ENCODE measurements at regions of chr21 and their contacts with region 1.

Region 1: GRCh38 chr21:33324291-33325221 is at the start of gene IFNAR1:
- DNase-seq: peak; percentile 97
- ATAC-seq: peak; percentile 80
- H3K4me3 Mint-ChIP-seq: no peak within 1 kb of the TSS
- H3K27ac Mint-ChIP-seq: no peak within 1 kb of the TSS
- H3K4me1 Mint-ChIP-seq: peaks cover 32% of the 10 kb centered on the region
- H3K27me3 Mint-ChIP-seq: no peaks in the 10 kb centered on the region
- CTCF ChIP-seq: no peak
- total RNA-seq, gene IFNAR1: 33.9 and 34.5 TPM in 2 replicates

Region 2: GRCh38 chr21:33218421-33218820 is 106.1 kb before region 1 on chr21:
- CTCF ChIA-PET with region 1: no interaction called
- POLR2A ChIA-PET with region 1: interaction called, 17 read pairs
- intact Hi-C with region 1: no loop called
- DNase-seq: no peak
- ATAC-seq: no peak
- H3K4me3 Mint-ChIP-seq: no peak overlapping the region
- H3K27ac Mint-ChIP-seq: peak overlapping the region; percentile 47
- H3K4me1 Mint-ChIP-seq: peaks cover 52% of the 10 kb centered on the region
- H3K27me3 Mint-ChIP-seq: no peaks in the 10 kb centered on the region
- CTCF ChIP-seq: no peak

Region 3: DNA sequence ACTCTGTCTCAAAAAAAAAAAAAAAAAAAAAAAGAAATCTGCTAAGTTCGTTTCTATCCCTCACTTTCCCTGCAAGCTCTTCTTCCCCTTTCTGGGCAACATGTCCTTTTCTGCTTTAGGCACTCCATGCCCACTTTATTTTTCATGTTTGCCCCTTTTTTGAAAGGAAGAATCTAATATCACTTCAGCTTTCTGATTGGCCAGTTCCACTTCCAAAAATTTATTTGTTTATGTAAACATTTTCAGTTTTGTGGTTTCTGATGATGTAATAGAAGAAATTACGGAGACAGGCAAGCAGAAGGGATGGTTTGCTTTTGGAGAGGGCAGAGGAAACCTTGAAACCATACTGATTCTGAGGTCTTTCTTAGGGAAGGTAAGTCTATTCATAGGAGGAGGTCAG is 15.4 kb after region 1 on chr21:
- CTCF ChIA-PET with region 1: no interaction called
- POLR2A ChIA-PET with region 1: interaction called, 33 read pairs
- intact Hi-C with region 1: loop called (anchors 2 kb)
- DNase-seq: no peak
- ATAC-seq: no peak
- H3K4me3 Mint-ChIP-seq: peak overlapping the region; percentile 46
- H3K27ac Mint-ChIP-seq: peak overlapping the region; percentile 83
- H3K4me1 Mint-ChIP-seq: peaks cover 43% of the 10 kb centered on the region
- H3K27me3 Mint-ChIP-seq: no peaks in the 10 kb centered on the region
- CTCF ChIP-seq: no peak

Region 4: GRCh38 chr21:33403779-33404585 is 79.4 kb after region 1 on chr21:
- CTCF ChIA-PET with region 1: no interaction called
- POLR2A ChIA-PET with region 1: interaction called, 11 read pairs
- intact Hi-C with region 1: loop called (anchors 2 kb)
- DNase-seq: peak; percentile 39
- ATAC-seq: peak; percentile 43
- H3K4me3 Mint-ChIP-seq: peak overlapping the region; percentile 95
- H3K27ac Mint-ChIP-seq: peak overlapping the region; percentile 94
- H3K4me1 Mint-ChIP-seq: peaks cover 80% of the 10 kb centered on the region
- H3K27me3 Mint-ChIP-seq: no peaks in the 10 kb centered on the region
- CTCF ChIP-seq: no peak

Region 5: DNA sequence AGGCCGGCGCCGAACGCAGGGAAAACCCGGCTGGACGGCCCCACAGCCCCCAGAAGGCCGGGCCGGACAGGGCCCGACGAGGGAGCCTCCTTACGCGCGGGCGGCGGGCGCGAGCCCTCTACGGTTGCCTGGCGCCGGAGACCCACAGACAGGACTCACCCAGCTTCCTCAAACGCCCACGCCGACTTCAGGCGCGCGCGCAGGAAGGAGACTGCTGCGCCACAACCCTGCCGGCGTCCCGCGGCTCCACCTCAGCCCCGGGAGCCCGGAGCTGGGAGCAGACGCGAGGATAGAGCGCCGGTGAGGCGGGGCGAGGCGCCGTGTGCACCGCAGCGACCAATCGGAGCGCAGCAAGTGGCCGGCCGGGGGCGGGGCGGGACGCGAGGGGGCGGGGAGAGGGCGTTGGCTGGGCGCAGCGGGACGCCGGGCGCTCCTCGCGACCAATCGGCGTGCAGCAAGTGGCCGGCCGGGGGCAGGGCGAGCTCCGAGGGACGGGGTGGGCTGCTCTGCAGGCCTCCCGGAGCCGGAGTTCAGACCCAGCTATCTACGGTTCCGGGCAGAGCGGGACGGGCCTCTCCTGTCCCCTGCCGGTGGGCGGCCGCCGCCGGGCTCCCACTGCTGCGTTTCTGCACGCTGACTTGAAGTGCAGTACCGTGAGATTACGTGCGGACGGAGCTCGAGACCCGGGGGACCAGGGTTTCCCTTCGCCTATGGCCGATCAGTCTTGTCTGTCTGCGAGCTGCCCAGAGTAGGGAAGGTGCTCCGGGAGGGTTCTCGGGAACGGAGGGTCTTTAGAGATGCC is 155.3 kb after region 1 on chr21 and contains the start of gene TMEM50B:
- CTCF ChIA-PET with region 1: no interaction called
- POLR2A ChIA-PET with region 1: interaction called, 23 read pairs
- intact Hi-C with region 1: loop called (anchors 1 kb)
- DNase-seq: peak; percentile 88
- ATAC-seq: peak; percentile 88
- H3K4me3 Mint-ChIP-seq: peak within 1 kb of the TSS; percentile 92
- H3K27ac Mint-ChIP-seq: peak within 1 kb of the TSS; percentile 90
- H3K4me1 Mint-ChIP-seq: peaks cover 20% of the 10 kb centered on the region
- H3K27me3 Mint-ChIP-seq: no peaks in the 10 kb centered on the region
- CTCF ChIP-seq: no peak
- total RNA-seq, gene TMEM50B: 42.3 and 47.2 TPM in 2 replicates

Measured in activated B cell treated with CpG ODN at 0.5 μM for 24 hours (primary cell).